Posterior cingulate gyrus (tissue), 11 donors: ENCODE measurements at regions of chr21 and their contacts with region 1.

Region 1: DNA sequence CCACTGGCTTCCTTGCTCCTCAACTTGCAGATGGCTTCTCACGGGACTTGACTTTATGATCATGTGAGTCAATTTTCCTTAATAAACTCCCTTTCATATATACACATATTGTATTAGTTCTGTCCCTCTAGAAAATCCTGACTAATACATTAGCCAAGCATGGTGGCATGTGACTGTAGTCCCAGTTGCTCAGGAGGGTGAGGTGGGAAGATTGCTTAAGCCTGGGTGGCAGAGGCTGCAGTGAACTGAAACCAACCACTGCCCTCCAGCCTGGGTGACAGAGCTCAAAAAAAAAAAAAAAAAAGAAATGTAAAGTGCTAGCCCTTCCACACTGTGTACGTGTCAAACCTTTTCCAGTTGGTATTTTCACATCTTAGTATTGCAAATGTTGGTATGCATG is 857.0 kb downstream of the LTN1 start:
- DNase-seq: no peak

Region 2: DNA sequence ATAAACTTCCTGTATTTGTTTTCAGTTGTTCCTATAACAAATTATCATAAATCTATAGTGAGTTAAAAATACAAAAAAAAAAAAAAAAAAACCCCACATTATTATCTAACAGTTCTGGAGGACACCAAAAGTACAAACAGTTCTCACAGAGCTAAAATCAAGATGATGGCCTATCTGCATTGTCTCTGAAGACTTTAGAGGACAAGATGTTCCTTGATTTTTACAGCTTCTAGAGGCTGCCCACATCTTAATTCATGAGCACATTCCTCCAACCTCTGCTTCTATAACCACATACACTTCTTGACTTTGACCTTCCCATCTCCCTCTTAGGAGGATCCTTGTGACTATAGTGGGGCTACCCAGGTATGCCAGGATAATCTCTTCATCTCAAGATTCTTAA is 51.0 kb after region 1 on chr21:
- intact Hi-C with region 1: loop called (anchors 10 kb)
- DNase-seq: no peak